PC-9 (cell line): ENCODE measurements at regions of chr16 and their contacts with region 1.

Region 1: GRCh38 chr16:8674413-8675022 is at the start of gene ABAT:
- DNase-seq: peak; percentile 74 to 94
- H3K4me3 ChIP-seq: peak within 1 kb of the TSS; percentile 68
- H3K27ac ChIP-seq: no peak within 1 kb of the TSS
- H3K4me1 ChIP-seq: peaks cover 47% of the 10 kb centered on the region
- H3K27me3 ChIP-seq: no peaks in the 10 kb centered on the region
- CTCF ChIP-seq: no peak
- total RNA-seq, gene ABAT: 8.6 and 12.9 TPM in 2 replicates

Region 2: DNA sequence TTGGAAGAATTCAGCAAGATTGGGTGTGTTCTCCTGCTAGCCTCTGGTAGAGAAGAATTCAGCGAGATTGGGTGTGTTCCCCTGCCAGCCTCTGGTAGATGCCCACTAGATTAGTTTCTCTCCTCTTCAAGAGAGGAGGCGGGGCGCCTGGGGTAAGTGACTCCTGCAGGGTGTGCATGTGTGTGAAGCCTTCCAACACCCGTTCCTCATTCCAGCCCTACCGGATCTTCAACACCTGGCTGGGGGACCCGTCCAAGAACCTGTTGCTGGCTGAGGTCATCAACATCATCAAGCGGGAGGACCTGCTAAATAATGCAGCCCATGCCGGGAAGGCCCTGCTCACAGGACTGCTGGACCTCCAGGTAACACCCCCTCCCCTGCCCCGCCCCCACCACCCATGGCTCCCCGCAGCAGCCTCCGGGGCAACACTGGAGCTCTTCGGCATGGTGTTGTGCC is 101.6 kb after region 1 on chr16:
- CTCF ChIA-PET with region 1: no interaction called
- POLR2A ChIA-PET with region 1: no interaction called
- intact Hi-C with region 1: loop called (anchors 1 kb)
- DNase-seq: peak; percentile 91 to 96
- H3K4me3 ChIP-seq: no peak overlapping the region
- H3K27ac ChIP-seq: no peak overlapping the region
- H3K4me1 ChIP-seq: peaks cover 9% of the 10 kb centered on the region
- H3K27me3 ChIP-seq: no peaks in the 10 kb centered on the region
- CTCF ChIP-seq: no peak

Region 3: DNA sequence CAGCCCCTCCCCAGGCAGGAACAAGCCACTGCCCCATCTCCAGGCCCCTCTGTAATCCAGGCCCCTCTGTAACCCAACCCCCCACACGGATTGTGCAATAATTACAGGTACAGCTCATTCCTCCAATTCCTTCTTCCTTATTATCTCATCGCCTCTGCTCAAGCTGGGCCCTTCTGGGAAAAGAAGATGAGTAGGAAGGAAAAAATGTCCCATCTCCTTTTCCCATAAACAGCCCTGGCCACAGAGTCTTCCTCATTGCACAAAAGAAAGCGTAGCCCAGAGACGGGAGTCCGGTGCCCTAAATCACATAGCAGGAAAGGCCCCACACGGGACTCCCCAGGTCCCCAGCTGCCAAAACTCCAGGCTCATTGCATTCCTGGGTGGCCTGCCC is 204.0 kb after region 1 on chr16:
- CTCF ChIA-PET with region 1: no interaction called
- POLR2A ChIA-PET with region 1: interaction called, 12 read pairs
- intact Hi-C with region 1: loop called (anchors 5 kb)
- DNase-seq: peak; percentile 70 to 81
- H3K4me3 ChIP-seq: no peak overlapping the region; the same call in 1 of the 2 replicates
- H3K27ac ChIP-seq: peak overlapping the region; percentile 76
- H3K4me1 ChIP-seq: peaks cover 23% of the 10 kb centered on the region
- H3K27me3 ChIP-seq: no peaks in the 10 kb centered on the region
- CTCF ChIP-seq: no peak